ENCODE measurements at regions of chr9 and their contacts with region 1.

Region 1: DNA sequence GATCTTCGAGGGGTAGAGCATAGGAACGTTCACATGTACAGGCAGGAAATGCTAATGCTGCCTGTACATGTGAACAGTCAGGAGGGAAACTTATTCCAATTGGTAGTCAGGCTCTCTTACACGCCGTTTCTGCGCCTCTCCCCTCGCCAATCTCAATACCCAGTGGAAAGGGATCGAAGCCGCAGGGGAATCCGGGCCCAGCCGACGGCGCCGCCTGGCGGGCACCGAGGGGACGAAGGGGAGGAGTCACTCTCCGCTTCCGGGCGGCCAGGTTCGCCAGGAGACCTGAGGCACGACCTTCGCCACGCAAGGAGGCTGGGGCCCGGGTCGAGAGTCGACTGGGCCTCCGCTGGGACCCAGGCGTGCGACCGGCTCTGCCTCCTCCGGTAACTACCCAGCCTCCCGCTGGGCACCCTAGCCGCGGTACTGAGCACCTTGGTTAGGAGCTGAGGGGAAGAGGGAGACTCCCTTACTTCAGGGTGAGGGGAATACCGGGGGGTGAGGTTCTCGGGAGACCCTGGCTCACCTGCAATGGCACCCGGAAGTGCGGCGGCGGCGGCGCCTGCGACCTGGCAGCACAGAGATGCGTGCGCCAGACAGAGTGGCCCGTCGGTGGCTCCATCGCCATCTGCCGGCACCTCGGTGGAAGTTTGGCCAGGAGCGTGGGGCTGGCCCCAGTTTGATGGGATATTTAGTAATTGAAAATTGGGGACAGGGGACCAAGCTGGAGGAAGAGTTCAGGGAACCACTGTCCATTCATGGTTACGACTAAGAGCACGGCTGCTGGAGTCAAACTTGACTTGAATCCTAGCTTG is at the start of gene PIGO:
- DNase-seq: peak; percentile 95
- ATAC-seq: peak; percentile 97
- total RNA-seq, gene PIGO: 8.2 TPM

Region 2: GRCh38 chr9:34862043-34862442 is 234.2 kb before region 1 on chr9:
- intact Hi-C with region 1: no loop called
- DNase-seq: no peak
- ATAC-seq: no peak

Region 3: DNA sequence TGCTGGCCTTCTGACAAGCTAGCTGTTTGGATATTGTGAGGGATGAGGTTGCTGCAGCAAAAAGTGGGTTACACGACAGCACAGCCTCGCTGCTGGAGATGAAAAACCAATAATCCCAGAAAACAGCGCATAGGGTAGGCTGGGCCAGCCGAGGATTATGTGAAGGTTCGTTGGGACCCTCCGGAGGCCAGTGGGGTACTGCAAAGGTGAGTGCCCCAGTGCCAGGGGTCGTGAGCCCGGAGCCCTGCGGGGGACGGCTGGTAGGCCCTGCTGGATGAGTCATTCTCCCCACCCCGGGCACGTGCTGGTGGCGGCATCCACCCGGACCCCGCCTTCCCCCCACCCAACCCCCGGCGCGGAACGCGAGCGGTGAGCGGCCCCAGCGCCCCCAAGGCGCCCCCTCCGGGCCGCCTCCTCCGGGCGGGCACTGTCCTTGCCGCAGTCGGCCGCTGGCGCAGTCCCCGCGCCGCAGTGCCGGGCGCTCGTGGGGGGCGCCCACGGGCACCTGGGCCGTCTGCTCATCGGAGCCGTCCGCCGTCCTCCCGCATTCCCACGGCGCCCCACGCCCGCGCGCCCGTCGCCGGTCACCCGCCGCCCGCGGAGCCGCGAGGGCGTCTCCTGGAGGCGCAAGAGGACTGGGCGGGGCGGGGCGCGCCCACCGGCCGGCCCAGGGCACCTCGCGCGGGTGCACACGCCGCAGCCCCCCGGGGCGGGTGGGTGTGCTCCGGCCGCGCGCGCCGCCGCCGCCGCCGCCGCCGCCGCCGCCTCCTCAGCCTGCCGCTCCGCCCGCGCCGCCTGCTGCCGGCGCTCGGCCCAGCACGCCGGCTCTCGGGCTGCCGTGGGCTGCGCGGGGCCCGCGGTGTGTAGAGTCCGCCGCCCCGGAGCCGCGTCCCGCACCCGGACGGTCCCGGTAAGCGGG is 138.5 kb before region 1 on chr9 and contains the start of gene PHF24:
- intact Hi-C with region 1: no loop called
- DNase-seq: peak; percentile 39
- ATAC-seq: peak; percentile 75
- total RNA-seq, gene PHF24: 0.19 TPM

Region 4: GRCh38 chr9:34989003-34989945 is 107.0 kb before region 1 on chr9 and contains the start of gene DNAJB5:
- intact Hi-C with region 1: loop called (anchors 10 kb)
- DNase-seq: peak; percentile 99
- ATAC-seq: peak; percentile 85
- total RNA-seq, gene DNAJB5: 48.7 TPM

Measured in Right ventricle myocardium superior (tissue), 1 donor.